ENCODE measurements at regions of chr11 and their contacts with region 1.

Region 1: DNA sequence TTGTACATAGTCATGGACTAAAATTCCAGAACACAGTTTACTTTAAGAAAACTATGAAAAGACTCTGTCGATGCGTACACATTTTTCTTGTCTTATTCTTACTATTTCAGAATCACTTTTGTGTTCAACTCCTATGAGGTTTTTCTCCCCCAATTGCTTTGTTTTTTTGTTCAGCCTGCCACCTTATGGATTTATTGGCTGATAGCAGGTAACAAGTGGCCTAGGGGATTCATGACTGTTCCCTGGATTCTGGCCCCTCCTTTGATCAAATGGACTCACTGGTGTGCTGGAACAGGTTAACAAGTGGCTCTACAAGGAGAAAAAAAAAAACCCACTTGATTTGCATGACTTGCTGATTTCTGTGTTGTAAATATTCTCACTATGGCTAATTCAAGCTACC is 10.6 kb downstream of the MMP20 start:
- DNase-seq: no peak
- H3K4me3 ChIP-seq: no peak overlapping the region
- H3K27ac ChIP-seq: no peak overlapping the region
- H3K4me1 ChIP-seq: no peaks in the 10 kb centered on the region
- H3K27me3 ChIP-seq: no peaks in the 10 kb centered on the region
- CTCF ChIP-seq: peak; percentile 50; the same call in 1 of the 2 replicates

Region 2: DNA sequence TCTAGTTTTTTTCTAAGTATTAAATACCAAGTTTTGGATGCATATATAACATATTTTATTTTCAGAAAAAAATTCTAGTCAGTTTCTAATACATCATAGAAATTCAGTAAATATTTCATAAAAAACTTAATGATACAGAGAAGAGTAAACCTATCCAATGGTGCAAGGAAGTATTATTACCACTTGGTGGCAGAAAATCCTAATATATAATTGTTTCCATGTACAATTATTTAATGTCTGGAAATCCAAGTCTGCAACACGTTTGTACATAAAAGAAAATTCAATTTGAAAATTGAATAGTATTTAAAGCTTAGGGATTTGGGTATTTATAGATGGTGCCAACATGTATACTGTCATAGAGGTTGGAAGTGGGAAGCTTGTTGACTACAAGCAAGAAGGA is 1157.7 kb before region 1 on chr11:
- CTCF ChIA-PET with region 1: no interaction called
- POLR2A ChIA-PET with region 1: no interaction called
- intact Hi-C with region 1: loop called (anchors 10 kb)
- DNase-seq: no peak
- H3K4me3 ChIP-seq: no peak overlapping the region
- H3K27ac ChIP-seq: no peak overlapping the region
- H3K4me1 ChIP-seq: no peaks in the 10 kb centered on the region
- H3K27me3 ChIP-seq: no peaks in the 10 kb centered on the region
- CTCF ChIP-seq: peak; percentile 77

Region 3: GRCh38 chr11:102007567-102008437 is 606.7 kb before region 1 on chr11:
- CTCF ChIA-PET with region 1: no interaction called
- POLR2A ChIA-PET with region 1: no interaction called
- intact Hi-C with region 1: loop called (anchors 10 kb)
- DNase-seq: peak; percentile 46 to 99
- H3K4me3 ChIP-seq: 0 out of 2 replicates have a peak overlapping the region, but pooled peaks have one; percentile 6
- H3K27ac ChIP-seq: peak overlapping the region; percentile 90
- H3K4me1 ChIP-seq: peaks cover 68% of the 10 kb centered on the region
- H3K27me3 ChIP-seq: no peaks in the 10 kb centered on the region
- CTCF ChIP-seq: peak; percentile 88

Region 4: GRCh38 chr11:102346748-102347461 is 267.6 kb before region 1 on chr11 and contains the start of gene BIRC2:
- CTCF ChIA-PET with region 1: interaction called, 11 read pairs
- POLR2A ChIA-PET with region 1: interaction called, 4 read pairs
- intact Hi-C with region 1: loop called (anchors 1 kb)
- DNase-seq: peak; percentile 85 to 96
- H3K4me3 ChIP-seq: peak within 1 kb of the TSS; percentile 69
- H3K27ac ChIP-seq: peak within 1 kb of the TSS; percentile 87
- H3K4me1 ChIP-seq: peaks cover 29% of the 10 kb centered on the region
- H3K27me3 ChIP-seq: no peaks in the 10 kb centered on the region
- CTCF ChIP-seq: peak; percentile 74
- total RNA-seq, gene BIRC2: 33.7 and 37.5 TPM in 2 replicates

Region 5: DNA sequence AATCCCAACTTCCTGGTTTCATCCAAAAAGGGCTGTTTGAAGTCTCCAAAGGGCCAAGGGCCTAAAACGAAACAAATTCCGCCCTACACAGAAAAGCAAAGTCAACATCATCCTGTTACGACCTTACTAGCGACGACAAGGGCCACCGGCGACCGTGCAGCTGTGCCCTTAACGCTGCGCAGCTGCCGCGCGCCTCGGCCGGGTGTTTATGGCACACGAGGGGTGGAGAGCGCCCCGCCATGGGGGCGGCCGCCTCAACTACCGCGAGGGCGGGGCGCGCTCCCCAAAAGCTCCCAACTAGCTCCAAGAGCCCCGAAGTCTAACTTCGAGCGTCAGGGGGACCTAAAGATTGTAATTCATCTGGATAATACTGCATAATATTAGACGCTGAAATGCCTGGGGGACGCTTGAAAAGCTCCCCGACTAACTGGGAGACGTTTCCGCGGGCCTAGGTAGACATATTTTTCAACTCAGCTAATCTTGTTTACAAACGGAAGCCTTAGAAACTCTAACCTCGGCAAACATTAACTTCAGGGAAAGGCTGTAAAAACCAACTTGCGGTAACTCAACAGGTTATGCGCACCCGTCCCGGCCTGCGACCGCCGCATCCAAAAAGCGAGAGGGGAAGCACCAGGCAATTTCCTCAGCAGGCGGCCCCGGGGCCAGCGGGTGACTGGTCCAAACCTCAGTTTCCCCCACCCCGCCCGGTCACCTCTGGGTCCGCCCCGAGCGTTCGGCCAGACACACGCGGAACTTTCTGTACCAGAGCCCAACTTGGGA is 162.6 kb before region 1 on chr11:
- CTCF ChIA-PET with region 1: no interaction called
- POLR2A ChIA-PET with region 1: no interaction called
- intact Hi-C with region 1: loop called (anchors 5 kb)
- DNase-seq: peak; percentile 53 to 63
- H3K4me3 ChIP-seq: peak overlapping the region; percentile 88
- H3K27ac ChIP-seq: peak overlapping the region; percentile 72
- H3K4me1 ChIP-seq: peaks cover 62% of the 10 kb centered on the region
- H3K27me3 ChIP-seq: no peaks in the 10 kb centered on the region
- CTCF ChIP-seq: peak; percentile 20; the same call in 1 of the 2 replicates

Region 6: GRCh38 chr11:102630598-102631448 is 16.3 kb after region 1 on chr11:
- CTCF ChIA-PET with region 1: no interaction called
- POLR2A ChIA-PET with region 1: no interaction called
- intact Hi-C with region 1: no loop called
- DNase-seq: no peak
- H3K4me3 ChIP-seq: no peak overlapping the region
- H3K27ac ChIP-seq: no peak overlapping the region
- H3K4me1 ChIP-seq: peaks cover 6% of the 10 kb centered on the region; the same call in 1 of the 2 replicates
- H3K27me3 ChIP-seq: no peaks in the 10 kb centered on the region
- CTCF ChIP-seq: no peak

Region 7: DNA sequence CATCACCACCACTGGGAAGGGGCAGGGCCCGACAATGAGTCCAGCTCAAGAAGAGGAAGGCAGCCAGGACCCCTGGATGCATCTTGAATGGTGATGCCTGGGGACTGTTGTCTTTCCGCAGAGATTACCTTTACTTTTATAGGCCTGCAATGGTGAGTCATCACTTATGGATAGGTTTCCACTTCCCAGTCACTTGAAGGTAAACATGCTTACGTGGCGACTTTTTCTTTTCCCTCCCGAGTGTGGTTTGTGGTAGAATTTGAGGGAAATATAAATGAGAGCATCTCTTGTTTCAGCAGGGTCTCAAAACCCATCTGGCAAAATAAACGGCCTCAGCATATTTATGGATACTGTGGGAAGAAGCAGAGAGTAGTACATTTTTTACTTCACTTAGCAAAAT is 341.1 kb after region 1 on chr11 and contains the start of gene MMP13:
- CTCF ChIA-PET with region 1: interaction called, 11 read pairs
- POLR2A ChIA-PET with region 1: no interaction called
- intact Hi-C with region 1: no loop called
- DNase-seq: no peak
- H3K4me3 ChIP-seq: no peak within 1 kb of the TSS
- H3K27ac ChIP-seq: no peak within 1 kb of the TSS
- H3K4me1 ChIP-seq: no peaks in the 10 kb centered on the region
- H3K27me3 ChIP-seq: no peaks in the 10 kb centered on the region
- CTCF ChIP-seq: no peak
- total RNA-seq, gene MMP13: not detected in 2 replicates